Tibial artery (tissue), 4 donors: ENCODE measurements at regions of chr15 and their contacts with region 1.

Region 1: GRCh38 chr15:22786868-22787698 is 639 bp downstream of the NIPA1 start:
- DNase-seq: peak in 1 of 2 donors; percentile 64
- H3K4me3 ChIP-seq: peak overlapping the region; percentile 65 to 77
- H3K27ac ChIP-seq: peak overlapping the region; percentile 83 to 89
- H3K4me1 ChIP-seq: peaks cover 0 to 16% (median 4%) of the 10 kb centered on the region in 4 donors
- H3K27me3 ChIP-seq: no peaks in the 10 kb centered on the region
- CTCF ChIP-seq: no peak

Region 2: GRCh38 chr15:22838292-22839042 is 51.4 kb after region 1 on chr15 and contains the start of gene NIPA2:
- intact Hi-C with region 1: loop called (anchors 2 kb)
- DNase-seq: peak; percentile 98 to 99
- H3K4me3 ChIP-seq: peak within 1 kb of the TSS; percentile 77 to 88
- H3K27ac ChIP-seq: peak within 1 kb of the TSS; percentile 92
- H3K4me1 ChIP-seq: peaks cover 0 to 22% (median 13%) of the 10 kb centered on the region in 4 donors
- H3K27me3 ChIP-seq: no peaks in the 10 kb centered on the region
- CTCF ChIP-seq: peak in 1 of 2 experiments; percentile 31

Region 3: GRCh38 chr15:22895469-22896190 is 108.5 kb after region 1 on chr15:
- intact Hi-C with region 1: no loop called
- DNase-seq: no peak
- H3K4me3 ChIP-seq: no peak overlapping the region
- H3K27ac ChIP-seq: no peak overlapping the region
- H3K4me1 ChIP-seq: no peaks in the 10 kb centered on the region
- H3K27me3 ChIP-seq: no peaks in the 10 kb centered on the region
- CTCF ChIP-seq: no peak

Region 4: GRCh38 chr15:23039151-23039916 is 252.3 kb after region 1 on chr15 and contains the start of gene TUBGCP5:
- intact Hi-C with region 1: loop called (anchors 5 kb)
- DNase-seq: peak; percentile 95 to 98
- H3K4me3 ChIP-seq: peak within 1 kb of the TSS; percentile 80 to 91
- H3K27ac ChIP-seq: peak within 1 kb of the TSS; percentile 74 to 78
- H3K4me1 ChIP-seq: peaks cover 0 to 18% (median 11%) of the 10 kb centered on the region in 4 donors
- H3K27me3 ChIP-seq: no peaks in the 10 kb centered on the region
- CTCF ChIP-seq: peak; percentile 51 to 63